HCT116 (cell line): ENCODE measurements at regions of chr7 and their contacts with region 1.

Region 1: GRCh38 chr7:142508258-142508689 is 241.0 kb upstream of the PRSS1 start:
- DNase-seq: peak; percentile 54
- ATAC-seq: peak; percentile 85
- H3K4me3 ChIP-seq: peak overlapping the region in 1 of 2 experiments; percentile 18; a peak in 1 of 4 replicates
- H3K27ac ChIP-seq: peak overlapping the region; percentile 36
- H3K4me1 ChIP-seq: peaks cover 4 to 41% of the 10 kb centered on the region in 2 experiments; a peak in 3 of 4 replicates
- H3K27me3 ChIP-seq: no peaks in the 10 kb centered on the region
- CTCF ChIP-seq: no peak
- POLR2A ChIP-seq: no peak
- RAD21 ChIP-seq: no peak

Region 2: GRCh38 chr7:142471820-142472219 is 36.5 kb before region 1 on chr7:
- CTCF ChIA-PET with region 1: no interaction called
- POLR2A ChIA-PET with region 1: no interaction called
- RAD21 ChIA-PET with region 1: no interaction called
- intact Hi-C with region 1: loop called (anchors 1 kb)
- DNase-seq: no peak
- ATAC-seq: no peak; the same call in 1 of the 2 replicates
- H3K4me3 ChIP-seq: no peak overlapping the region
- H3K27ac ChIP-seq: no peak overlapping the region
- H3K4me1 ChIP-seq: no peaks in the 10 kb centered on the region
- H3K27me3 ChIP-seq: no peaks in the 10 kb centered on the region
- CTCF ChIP-seq: no peak
- POLR2A ChIP-seq: no peak
- RAD21 ChIP-seq: no peak

Region 3: DNA sequence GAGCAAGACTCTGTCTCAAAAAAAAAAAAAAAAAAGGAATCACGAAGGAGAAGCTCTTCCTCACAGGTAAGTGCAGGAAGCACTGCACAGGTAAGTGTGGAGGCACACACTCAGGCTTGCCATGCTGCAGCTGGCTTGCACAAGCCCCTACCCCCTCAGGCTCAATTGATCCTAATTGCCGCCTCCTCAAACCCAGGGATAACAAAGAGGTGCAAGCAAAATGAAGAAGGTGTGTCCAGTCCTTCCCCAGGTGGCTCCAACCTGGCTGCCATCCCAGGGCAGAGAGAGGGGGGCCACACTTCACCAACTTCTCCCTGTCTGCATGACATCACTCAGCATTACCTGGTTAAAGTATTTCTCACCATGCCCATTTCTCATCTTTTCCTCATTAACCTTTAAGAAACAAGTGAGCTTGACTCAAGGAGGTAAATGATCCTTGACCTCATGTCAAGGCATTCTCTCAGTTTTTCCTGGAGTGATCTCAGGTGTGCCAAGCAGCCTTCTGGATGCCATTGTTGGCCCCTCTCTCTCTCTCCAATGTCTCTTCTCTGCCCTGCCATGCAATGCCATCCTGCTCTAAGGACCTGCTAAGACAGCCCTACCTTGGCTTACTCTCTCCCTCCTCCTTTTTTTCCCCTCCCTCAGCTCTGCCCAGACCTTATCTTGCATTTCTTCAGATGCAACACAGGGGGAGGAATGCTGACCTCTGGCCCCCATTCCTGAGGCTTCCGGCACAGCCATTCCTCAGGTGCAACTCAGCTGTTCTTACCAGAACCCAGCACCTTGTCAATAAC is 390.3 kb after region 1 on chr7:
- CTCF ChIA-PET with region 1: no interaction called
- POLR2A ChIA-PET with region 1: no interaction called
- RAD21 ChIA-PET with region 1: no interaction called
- intact Hi-C with region 1: no loop called
- DNase-seq: no peak
- ATAC-seq: no peak
- H3K4me3 ChIP-seq: no peak overlapping the region
- H3K27ac ChIP-seq: no peak overlapping the region
- H3K4me1 ChIP-seq: no peaks in the 10 kb centered on the region
- H3K27me3 ChIP-seq: peaks cover 33% of the 10 kb centered on the region
- CTCF ChIP-seq: no peak
- POLR2A ChIP-seq: no peak
- RAD21 ChIP-seq: no peak